ENCODE measurements at regions of chr10 and their contacts with region 1.

Region 1: GRCh38 chr10:91908337-91909116 is 759 bp downstream of the FGFBP3 start:
- DNase-seq: no peak
- H3K4me3 ChIP-seq: peak overlapping the region; percentile 72
- H3K27ac ChIP-seq: no peak overlapping the region
- H3K27me3 ChIP-seq: no peaks in the 10 kb centered on the region
- CTCF ChIP-seq: peak; percentile 20; the same call in 1 of the 2 replicates

Region 2: DNA sequence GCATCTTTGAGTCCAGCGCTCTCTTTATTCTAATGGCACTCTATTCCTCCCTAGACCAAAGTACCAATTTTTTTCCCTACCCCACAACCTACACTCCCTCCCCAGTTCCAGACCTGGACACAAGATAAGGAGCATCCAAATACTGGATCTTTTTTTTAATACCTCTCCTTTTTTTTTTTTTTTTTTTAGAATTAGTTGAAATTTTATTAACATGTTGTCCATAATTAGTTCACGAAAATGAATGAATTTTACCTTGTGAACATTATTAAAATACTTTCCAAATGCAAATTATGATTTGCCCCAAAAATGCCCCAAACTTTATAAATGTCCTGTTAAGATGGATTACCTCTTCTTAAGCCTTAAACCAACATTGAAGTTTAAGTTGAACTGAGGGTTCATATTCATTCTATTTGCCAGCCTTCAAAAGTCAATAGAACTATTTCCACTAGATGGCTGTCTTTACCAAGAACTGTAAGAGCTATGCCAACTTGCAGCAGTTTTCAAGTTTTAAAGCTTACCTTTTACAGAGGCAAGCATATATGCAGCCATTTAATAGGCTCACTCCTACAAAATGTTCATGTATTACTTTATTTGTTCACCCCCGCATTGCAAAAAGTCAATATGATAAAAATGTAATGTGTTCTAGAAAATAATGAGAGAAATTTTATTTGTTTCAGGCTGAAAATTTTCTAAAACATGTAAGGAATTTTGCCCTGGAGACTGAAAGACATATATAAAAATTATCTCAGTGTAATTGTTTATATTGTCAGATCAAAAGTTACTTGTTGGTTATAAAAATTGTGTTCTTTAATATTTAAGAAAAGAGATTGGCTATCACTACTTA is 150.0 kb before region 1 on chr10:
- CTCF ChIA-PET with region 1: interaction called, 33 read pairs
- POLR2A ChIA-PET with region 1: no interaction called
- DNase-seq: peak; percentile 13
- H3K4me3 ChIP-seq: no peak overlapping the region
- H3K27ac ChIP-seq: no peak overlapping the region
- H3K27me3 ChIP-seq: no peaks in the 10 kb centered on the region
- CTCF ChIP-seq: peak; percentile 54

Region 3: GRCh38 chr10:91838199-91838598 is 70.3 kb before region 1 on chr10:
- CTCF ChIA-PET with region 1: no interaction called
- POLR2A ChIA-PET with region 1: no interaction called
- DNase-seq: no peak
- H3K4me3 ChIP-seq: no peak overlapping the region
- H3K27ac ChIP-seq: no peak overlapping the region
- H3K27me3 ChIP-seq: no peaks in the 10 kb centered on the region
- CTCF ChIP-seq: no peak

Region 4: GRCh38 chr10:91856637-91857036 is 51.9 kb before region 1 on chr10:
- CTCF ChIA-PET with region 1: interaction called, 13 read pairs
- POLR2A ChIA-PET with region 1: no interaction called
- DNase-seq: no peak
- H3K4me3 ChIP-seq: no peak overlapping the region
- H3K27ac ChIP-seq: no peak overlapping the region
- H3K27me3 ChIP-seq: no peaks in the 10 kb centered on the region
- CTCF ChIP-seq: peak; percentile 46

Region 5: DNA sequence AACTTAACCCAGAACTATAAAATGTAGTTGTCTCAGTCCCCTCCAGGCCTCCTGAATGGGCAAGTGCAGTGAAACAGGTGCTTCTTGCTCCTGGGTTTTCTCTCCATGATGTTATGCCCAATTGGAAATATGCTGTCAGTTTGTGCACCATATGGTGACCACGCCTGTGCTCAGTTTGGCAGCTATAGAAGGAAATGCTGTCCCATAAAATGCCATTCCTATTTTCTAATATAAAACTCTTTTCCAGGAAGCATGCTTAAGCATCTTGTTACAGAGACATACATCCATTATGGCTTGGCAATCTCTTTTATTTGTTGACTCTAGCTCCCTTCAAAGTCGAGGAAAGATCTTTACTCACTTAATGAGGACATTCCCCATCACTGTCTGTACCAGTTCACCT is 44.4 kb before region 1 on chr10:
- CTCF ChIA-PET with region 1: interaction called, 10 read pairs
- POLR2A ChIA-PET with region 1: no interaction called
- DNase-seq: no peak
- H3K4me3 ChIP-seq: no peak overlapping the region
- H3K27ac ChIP-seq: no peak overlapping the region
- H3K27me3 ChIP-seq: no peaks in the 10 kb centered on the region
- CTCF ChIP-seq: no peak

Region 6: GRCh38 chr10:91875779-91876178 is 32.7 kb before region 1 on chr10:
- CTCF ChIA-PET with region 1: no interaction called
- POLR2A ChIA-PET with region 1: no interaction called
- DNase-seq: no peak
- H3K4me3 ChIP-seq: no peak overlapping the region
- H3K27ac ChIP-seq: no peak overlapping the region
- H3K27me3 ChIP-seq: no peaks in the 10 kb centered on the region
- CTCF ChIP-seq: no peak

Region 7: DNA sequence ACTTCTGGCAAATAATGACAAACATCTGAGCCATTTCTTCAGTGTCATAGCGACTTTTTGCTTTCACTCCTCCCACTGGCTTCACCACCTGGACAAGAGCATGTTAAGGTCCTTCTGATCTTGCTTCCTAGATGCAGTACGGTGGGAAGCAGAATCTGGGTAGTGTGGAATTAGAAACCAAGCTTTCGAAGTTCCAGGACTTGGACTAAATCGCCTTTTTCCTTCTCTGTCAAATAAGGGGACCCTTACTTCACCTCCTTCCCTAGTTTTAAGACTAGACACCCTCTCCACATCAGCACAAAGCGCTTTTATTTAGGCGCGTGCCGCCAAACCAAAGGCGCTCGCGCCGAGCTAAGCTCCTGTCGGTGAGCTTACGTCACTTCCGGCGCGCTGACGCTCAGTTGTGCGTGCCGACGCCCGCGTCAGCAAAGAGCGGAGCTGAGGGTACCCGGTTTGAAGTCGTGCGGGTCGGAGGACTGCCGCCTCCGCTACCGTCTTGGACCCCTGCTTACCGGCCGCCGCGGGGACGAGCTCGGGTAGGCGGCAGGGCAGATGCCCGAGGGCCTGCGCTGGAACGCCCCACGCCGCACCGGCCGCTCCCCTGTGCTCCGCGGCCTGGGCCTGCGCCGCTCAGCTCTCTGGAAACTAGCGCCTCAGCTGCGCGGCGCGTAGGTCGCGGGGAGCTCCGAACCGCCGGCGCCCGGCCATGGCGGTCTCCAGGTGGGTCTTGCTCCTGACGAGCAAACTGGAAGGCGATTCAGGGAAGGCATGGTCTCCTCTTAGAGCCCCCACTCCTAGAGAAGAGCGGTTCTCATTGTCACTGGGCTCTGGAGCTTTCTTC is 15.1 kb after region 1 on chr10 and contains the start of gene BTAF1:
- CTCF ChIA-PET with region 1: interaction called, 11 read pairs
- POLR2A ChIA-PET with region 1: interaction called, 10 read pairs
- DNase-seq: peak; percentile 81
- H3K4me3 ChIP-seq: peak within 1 kb of the TSS; percentile 92
- H3K27ac ChIP-seq: peak within 1 kb of the TSS; percentile 96
- H3K27me3 ChIP-seq: no peaks in the 10 kb centered on the region
- CTCF ChIP-seq: no peak
- polyA plus RNA-seq, gene BTAF1: 27.2 and 35.0 TPM in 2 replicates

Measured in AG04450 (cell line).